Activated T-helper 2 cell treated with anti-CD3 and anti-CD28 coated beads, Interferon-gamma antibody, Interleukin-2, Interleukin-4, amounts not matched to agents 10 μg/mL and 5 μg/mL and 100 μg/mL, durations not matched to agents 14 hours and 24 hours and 36 hours (primary cell): ENCODE measurements at regions of chr6 and their contacts with region 1.

Region 1: DNA sequence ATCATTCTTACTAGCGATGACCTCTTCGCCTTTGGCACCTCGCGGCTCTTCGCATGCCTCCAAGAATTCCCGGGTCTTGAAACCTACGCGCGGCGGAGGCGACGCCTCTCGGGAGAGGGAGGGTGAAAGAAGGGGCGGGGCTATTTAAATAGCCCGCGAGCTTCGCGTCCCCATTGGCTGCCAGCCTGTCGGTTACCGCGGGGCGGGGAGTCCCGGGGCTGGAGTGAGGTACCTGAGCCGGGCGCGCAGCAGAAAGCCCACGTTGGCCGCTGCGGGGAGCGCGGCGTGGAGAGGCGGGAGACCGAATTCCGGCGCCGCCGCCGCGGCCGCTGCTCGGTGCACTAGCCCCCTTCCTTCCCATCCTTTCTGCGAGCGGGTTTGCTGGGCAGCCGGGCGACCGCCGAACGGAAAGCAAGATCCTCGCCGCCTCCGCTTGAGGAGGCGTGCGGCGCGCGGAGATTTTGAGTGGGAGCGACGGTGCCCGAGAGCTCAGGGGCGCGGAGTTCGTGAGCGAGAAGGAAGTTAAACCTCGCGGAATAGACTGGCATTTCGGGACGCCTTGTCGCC is at the start of gene BMP6:
- DNase-seq: peak; percentile 71
- H3K4me3 Mint-ChIP-seq: peak within 1 kb of the TSS; percentile 78
- H3K27ac Mint-ChIP-seq: no peak within 1 kb of the TSS
- H3K4me1 Mint-ChIP-seq: peaks cover 23% of the 10 kb centered on the region
- H3K27me3 Mint-ChIP-seq: peaks cover 69% of the 10 kb centered on the region
- total RNA-seq, gene BMP6: 0.78 and 1.1 TPM in 2 replicates

Region 2: GRCh38 chr6:5995949-5996713 is 1729.8 kb before region 1 on chr6:
- intact Hi-C with region 1: loop called (anchors 5 kb)
- DNase-seq: no peak
- H3K4me3 Mint-ChIP-seq: peak overlapping the region; percentile 81
- H3K27ac Mint-ChIP-seq: no peak overlapping the region
- H3K4me1 Mint-ChIP-seq: peaks cover 39% of the 10 kb centered on the region
- H3K27me3 Mint-ChIP-seq: peaks cover 87% of the 10 kb centered on the region

Region 3: GRCh38 chr6:7541175-7542064 is 184.5 kb before region 1 on chr6 and contains the start of gene DSP:
- intact Hi-C with region 1: loop called (anchors 5 kb)
- DNase-seq: peak; percentile 15
- H3K4me3 Mint-ChIP-seq: peak within 1 kb of the TSS; percentile 80
- H3K27ac Mint-ChIP-seq: no peak within 1 kb of the TSS
- H3K4me1 Mint-ChIP-seq: peaks cover 9% of the 10 kb centered on the region
- H3K27me3 Mint-ChIP-seq: peaks cover 75% of the 10 kb centered on the region
- total RNA-seq, gene DSP: 0.02 TPM in 2 replicates

Region 4: DNA sequence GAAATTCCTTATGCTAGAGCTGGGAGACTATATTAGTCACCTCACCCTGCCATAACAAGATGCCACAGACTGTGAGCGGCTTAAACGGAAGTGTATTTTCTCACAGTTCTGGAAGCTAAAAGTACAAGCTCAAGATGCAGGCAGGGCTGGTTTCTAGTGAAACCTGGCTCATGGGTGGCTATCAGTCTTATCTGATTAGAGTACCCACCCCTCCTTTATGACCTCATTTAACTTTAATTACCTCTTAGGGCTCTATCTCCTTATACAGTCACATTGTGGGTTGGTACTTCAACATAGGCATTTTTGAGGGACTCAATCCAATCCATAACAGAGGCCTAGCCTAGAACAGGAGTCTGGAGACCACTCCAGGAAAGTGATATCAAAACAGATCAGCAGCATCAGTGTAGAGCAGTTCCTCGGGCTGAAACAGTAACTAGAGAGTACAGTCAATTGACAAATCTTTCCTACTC is 138.3 kb before region 1 on chr6:
- intact Hi-C with region 1: no loop called
- DNase-seq: no peak
- H3K4me3 Mint-ChIP-seq: no peak overlapping the region
- H3K27ac Mint-ChIP-seq: no peak overlapping the region
- H3K4me1 Mint-ChIP-seq: peaks cover 24% of the 10 kb centered on the region
- H3K27me3 Mint-ChIP-seq: peaks cover 7% of the 10 kb centered on the region

Region 5: DNA sequence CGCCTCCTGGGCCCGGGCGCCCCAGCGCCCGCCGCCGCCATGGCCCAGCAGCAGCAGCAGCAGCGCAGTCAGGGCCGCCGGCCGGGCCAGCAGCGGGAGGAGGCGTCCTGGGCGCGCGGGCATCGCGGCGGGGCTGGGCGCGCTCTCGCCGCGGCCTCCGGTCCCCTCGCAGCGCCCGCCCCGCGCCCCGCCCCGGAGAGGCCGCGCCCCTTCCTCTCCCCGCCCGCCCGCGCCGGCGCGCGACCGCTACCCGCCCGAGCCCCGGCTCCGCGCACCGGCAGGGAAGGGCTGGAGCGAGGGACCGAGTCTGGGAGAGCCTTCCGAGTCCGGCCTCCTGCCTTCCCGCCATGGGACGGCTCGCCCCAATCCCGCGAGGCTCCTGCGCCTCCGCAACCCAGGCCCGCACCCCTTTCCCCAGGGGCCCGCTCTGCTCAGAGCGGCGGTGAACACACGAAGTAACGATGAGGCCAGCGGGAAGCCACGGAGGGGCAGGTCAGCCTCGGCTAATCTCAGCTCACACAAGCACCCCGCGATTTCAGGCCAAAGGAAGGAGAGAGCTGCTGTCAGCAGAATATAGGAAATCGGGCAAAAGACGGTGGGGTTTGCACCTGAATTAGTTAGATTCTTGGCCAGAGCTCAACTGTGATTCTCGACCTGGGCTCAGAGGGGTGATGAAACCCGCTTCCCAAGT is 184.9 kb after region 1 on chr6 and contains the start of gene TXNDC5:
- intact Hi-C with region 1: loop called (anchors 5 kb)
- DNase-seq: peak; percentile 61
- H3K4me3 Mint-ChIP-seq: peak within 1 kb of the TSS; percentile 90
- H3K27ac Mint-ChIP-seq: peak within 1 kb of the TSS; percentile 75
- H3K4me1 Mint-ChIP-seq: peaks cover 12% of the 10 kb centered on the region
- H3K27me3 Mint-ChIP-seq: peaks cover 1% of the 10 kb centered on the region
- total RNA-seq, gene TXNDC5: 113 and 117 TPM in 2 replicates

Region 6: DNA sequence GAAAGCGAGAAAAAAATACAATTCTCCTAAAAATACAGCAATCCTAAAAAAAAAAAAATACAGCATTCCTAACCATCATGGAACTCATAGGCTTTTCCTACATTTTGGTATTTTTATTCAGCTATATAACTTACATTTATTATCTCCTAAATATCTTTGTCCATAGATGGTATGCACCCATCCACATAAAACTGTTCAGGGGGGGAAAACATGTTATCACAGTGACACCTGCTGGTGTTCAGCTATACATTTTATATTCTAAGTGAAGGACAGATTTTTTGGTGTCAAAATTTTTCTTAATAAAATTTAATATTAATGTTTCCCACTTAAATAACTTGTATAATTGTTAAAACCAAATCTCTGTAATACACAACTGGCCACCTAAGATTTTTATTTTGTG is 280.3 kb after region 1 on chr6:
- intact Hi-C with region 1: loop called (anchors 5 kb)
- DNase-seq: no peak
- H3K4me3 Mint-ChIP-seq: no peak overlapping the region
- H3K27ac Mint-ChIP-seq: no peak overlapping the region
- H3K4me1 Mint-ChIP-seq: peaks cover 4% of the 10 kb centered on the region
- H3K27me3 Mint-ChIP-seq: no peaks in the 10 kb centered on the region

Region 7: GRCh38 chr6:8219352-8219943 is 493.5 kb after region 1 on chr6:
- intact Hi-C with region 1: loop called (anchors 2 kb)
- DNase-seq: no peak
- H3K4me3 Mint-ChIP-seq: no peak overlapping the region
- H3K27ac Mint-ChIP-seq: no peak overlapping the region
- H3K4me1 Mint-ChIP-seq: no peaks in the 10 kb centered on the region
- H3K27me3 Mint-ChIP-seq: peaks cover 3% of the 10 kb centered on the region

Region 8: GRCh38 chr6:8435160-8435852 is 709.4 kb after region 1 on chr6 and contains the start of gene SLC35B3:
- intact Hi-C with region 1: loop called (anchors 2 kb)
- DNase-seq: peak; percentile 98
- H3K4me3 Mint-ChIP-seq: peak within 1 kb of the TSS; percentile 94
- H3K27ac Mint-ChIP-seq: peak within 1 kb of the TSS; percentile 98
- H3K4me1 Mint-ChIP-seq: peaks cover 29% of the 10 kb centered on the region
- H3K27me3 Mint-ChIP-seq: no peaks in the 10 kb centered on the region
- total RNA-seq, gene SLC35B3: 6.3 and 7.0 TPM in 2 replicates